ENCODE measurements at regions of chr3 and their contacts with region 1.

Region 1: DNA sequence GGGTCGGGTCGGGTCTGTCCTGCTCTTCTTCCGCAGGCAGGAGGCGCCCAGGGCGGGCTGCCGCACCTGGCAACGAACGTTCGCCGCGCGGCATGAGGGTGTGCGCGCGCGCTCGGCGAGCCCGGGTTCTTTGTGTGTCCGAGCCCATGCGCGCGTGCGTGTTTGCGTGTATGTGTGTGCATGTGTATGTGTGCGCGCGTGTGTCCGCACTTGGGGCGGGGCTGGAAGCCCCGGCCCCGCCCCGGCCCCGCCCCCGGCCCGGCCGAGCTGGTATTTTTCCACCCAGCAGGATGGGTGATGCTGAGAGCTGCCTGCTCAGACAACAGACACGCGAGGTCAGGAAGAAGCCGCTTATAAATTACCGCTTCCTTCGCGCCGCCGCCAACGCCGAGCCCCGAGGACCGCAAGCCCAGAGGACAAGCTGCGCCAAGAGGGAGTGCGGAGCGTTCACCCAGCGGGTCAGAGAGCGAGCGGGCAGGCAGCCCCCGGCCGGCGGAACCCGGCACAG is at the start of gene SLC6A6:
- DNase-seq: peak; percentile 92
- H3K4me3 Mint-ChIP-seq: peak within 1 kb of the TSS; percentile 97
- H3K27ac Mint-ChIP-seq: peak within 1 kb of the TSS; percentile 96
- H3K4me1 Mint-ChIP-seq: peaks cover 42% of the 10 kb centered on the region
- H3K27me3 Mint-ChIP-seq: peaks cover 3% of the 10 kb centered on the region
- total RNA-seq, gene SLC6A6: 45.4 and 51.2 TPM in 2 replicates

Region 2: DNA sequence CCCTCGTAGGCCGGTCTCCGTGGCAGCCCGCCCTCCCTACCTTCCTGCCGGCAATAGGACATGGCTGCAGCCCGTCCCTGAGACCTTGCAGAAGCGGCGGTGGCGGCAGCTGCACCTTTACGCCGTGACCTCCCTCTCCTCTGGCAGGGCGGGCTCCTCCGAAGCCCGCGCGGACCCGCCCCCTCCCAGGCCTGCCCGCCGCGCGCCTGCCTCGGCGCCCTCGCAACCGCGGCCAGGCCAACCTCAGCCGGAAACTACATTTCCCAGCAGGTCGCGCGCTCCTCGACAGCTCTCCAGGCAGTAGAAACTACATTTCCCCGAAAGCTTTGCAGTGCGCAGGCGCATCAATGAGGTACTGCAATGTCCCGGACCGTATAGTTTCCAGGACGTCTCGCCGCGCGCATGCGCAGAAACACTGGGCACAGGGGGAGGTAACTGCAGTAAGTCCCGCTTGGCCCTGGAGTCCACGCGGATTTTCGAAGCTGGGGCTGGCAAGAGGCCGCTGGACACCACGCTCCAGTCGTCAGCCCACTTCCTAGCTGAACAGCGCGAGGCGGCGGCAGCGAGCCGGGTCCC is 277.7 kb before region 1 on chr3 and contains the starts of genes CHCHD4 and TMEM43:
- intact Hi-C with region 1: loop called (anchors 1 kb)
- DNase-seq: peak; percentile 98
- H3K4me3 Mint-ChIP-seq: peak within 1 kb of the TSS; percentile 93
- H3K27ac Mint-ChIP-seq: peak within 1 kb of the TSS; percentile 96
- H3K4me1 Mint-ChIP-seq: peaks cover 67% of the 10 kb centered on the region
- H3K27me3 Mint-ChIP-seq: no peaks in the 10 kb centered on the region
- total RNA-seq, gene CHCHD4: 27.8 and 29.4 TPM in 2 replicates
- total RNA-seq, gene TMEM43: 40.4 and 41.3 TPM in 2 replicates

Region 3: GRCh38 chr3:14261229-14261628 is 141.1 kb before region 1 on chr3:
- intact Hi-C with region 1: loop called (anchors 1 kb)
- DNase-seq: peak; percentile 56
- H3K4me3 Mint-ChIP-seq: no peak overlapping the region
- H3K27ac Mint-ChIP-seq: no peak overlapping the region
- H3K4me1 Mint-ChIP-seq: no peaks in the 10 kb centered on the region
- H3K27me3 Mint-ChIP-seq: peaks cover 11% of the 10 kb centered on the region

Region 4: DNA sequence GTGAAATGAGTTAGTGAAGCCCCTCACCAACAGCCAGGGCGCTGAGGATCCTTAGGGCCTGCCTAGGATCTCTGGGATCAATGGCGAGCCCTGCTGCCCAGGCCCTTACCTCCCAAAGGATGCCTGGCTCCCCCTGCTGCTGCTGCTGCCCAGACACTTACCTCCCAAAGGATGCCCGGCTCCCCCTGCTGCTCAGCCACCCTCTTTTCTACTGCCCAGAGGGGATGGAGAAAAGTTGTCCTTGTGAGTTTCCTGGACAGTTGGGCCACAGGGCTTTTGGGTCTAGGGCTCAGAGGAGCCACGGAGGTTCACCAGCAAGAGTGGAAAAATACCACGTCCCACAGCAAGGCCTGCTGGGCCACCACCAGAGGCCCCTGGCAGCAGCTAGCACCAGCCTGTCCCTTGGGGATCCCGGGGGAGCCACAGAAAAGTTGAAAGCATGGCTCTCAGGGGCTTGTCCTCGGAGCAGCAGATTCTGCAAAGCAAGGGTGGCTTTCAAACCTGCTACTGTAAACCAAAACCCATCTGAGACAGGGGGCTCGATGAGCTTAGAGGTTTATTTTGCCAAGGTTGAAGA is 59.5 kb after region 1 on chr3:
- intact Hi-C with region 1: loop called (anchors 1 kb)
- DNase-seq: no peak
- H3K4me3 Mint-ChIP-seq: no peak overlapping the region
- H3K27ac Mint-ChIP-seq: no peak overlapping the region
- H3K4me1 Mint-ChIP-seq: peaks cover 28% of the 10 kb centered on the region
- H3K27me3 Mint-ChIP-seq: no peaks in the 10 kb centered on the region

Region 5: GRCh38 chr3:14651440-14652251 is 249.3 kb after region 1 on chr3 and contains the start of gene CCDC174:
- intact Hi-C with region 1: loop called (anchors 1 kb)
- DNase-seq: peak; percentile 94
- H3K4me3 Mint-ChIP-seq: peak within 1 kb of the TSS; percentile 99
- H3K27ac Mint-ChIP-seq: peak within 1 kb of the TSS; percentile 90
- H3K4me1 Mint-ChIP-seq: peaks cover 38% of the 10 kb centered on the region
- H3K27me3 Mint-ChIP-seq: peaks cover 4% of the 10 kb centered on the region
- total RNA-seq, gene CCDC174: 16.6 and 21.7 TPM in 2 replicates

Measured in activated T-helper 1 cell treated with anti-CD3 and anti-CD28 coated beads, Interleukin-12 subunit alpha, Interleukin-12 subunit beta, Interleukin-2, Interleukin-4 antibody, amounts not matched to agents 30 ng/mL and 10 ng/mL and 1 ng/mL, durations not matched to agents 14 hours and 24 hours and 36 hours (primary cell).